Spleen (tissue), 13 donors: ENCODE measurements at regions of chr18 and their contacts with region 1.

Region 1: GRCh38 chr18:2547477-2548087 is 23.7 kb downstream of the METTL4 start:
- DNase-seq: no peak
- H3K4me3 ChIP-seq: no peak overlapping the region
- H3K27ac ChIP-seq: no peak overlapping the region
- H3K4me1 ChIP-seq: peaks cover 0 to 10% (median 0%) of the 10 kb centered on the region in 6 donors
- H3K27me3 ChIP-seq: no peaks in the 10 kb centered on the region
- CTCF ChIP-seq: peak in 10 of 11 experiments; percentile 16 to 59 (median 53)
- POLR2A ChIP-seq: no peak

Region 2: DNA sequence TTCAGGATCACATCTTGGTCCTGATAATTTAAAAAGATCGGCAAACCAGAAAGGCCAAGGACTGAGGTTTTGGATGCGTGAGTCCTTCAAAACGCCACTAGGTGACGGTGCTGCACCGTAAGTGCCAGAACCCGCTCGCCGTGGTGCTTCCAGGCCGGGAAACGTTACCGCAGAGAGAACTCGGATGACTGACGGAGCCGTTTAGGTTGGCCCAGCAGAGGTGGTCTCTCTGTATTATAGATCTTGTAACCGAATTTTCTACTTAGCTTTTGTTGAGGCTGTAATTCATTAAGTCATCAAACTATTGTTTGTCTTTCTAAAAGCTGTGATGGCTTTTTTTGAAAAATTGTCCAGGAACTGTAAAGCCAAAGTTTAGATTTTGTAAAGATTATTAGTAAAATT is 1682.7 kb before region 1 on chr18:
- intact Hi-C with region 1: loop called (anchors 10 kb)
- DNase-seq: peak; percentile 82
- H3K4me3 ChIP-seq: no peak overlapping the region
- H3K27ac ChIP-seq: no peak overlapping the region
- H3K4me1 ChIP-seq: peaks cover 0 to 7% (median 1%) of the 10 kb centered on the region in 6 donors
- H3K27me3 ChIP-seq: peaks cover 0 to 47% (median 0%) of the 10 kb centered on the region in 7 donors
- CTCF ChIP-seq: peak; percentile 51 to 86 (median 72)
- POLR2A ChIP-seq: no peak

Region 3: DNA sequence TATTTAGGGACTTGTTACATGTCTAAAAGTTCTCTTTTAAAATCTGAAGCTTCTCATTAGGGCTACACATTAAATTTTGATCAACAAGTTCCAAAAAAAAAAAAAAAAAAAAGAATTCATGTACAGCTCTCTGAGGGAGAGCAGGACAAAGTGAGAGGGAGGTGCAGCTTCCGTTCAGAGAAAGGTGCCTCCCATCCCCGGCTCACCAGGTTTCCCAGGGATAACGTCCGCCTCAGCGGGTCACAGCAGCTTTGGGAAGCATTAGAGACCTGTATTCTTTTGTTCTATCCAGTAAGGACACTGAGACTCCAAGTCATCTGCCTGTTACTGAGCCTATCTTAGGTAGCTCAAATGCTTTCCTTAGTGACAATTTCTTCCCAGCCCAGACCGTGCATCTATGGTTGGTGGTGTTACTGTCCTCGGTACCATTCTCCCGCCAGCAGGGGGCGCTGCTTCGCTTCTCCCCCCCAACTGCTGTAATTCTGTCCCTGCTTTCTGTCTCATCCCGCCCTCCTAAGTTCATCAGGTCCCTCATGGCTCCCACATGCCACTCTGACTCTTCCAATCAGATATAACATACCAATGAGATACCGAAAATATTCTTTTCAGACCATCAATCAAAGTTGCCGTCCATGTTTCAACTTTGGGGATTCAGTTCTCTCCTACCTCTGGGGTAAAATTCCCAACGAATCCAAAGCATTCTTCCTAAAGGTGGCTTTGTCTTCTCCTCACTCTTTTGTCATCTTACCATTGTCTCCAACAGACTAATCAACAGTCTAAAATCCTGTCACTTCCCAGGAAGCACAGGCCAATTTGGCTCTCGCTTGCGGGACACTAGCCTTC is 442.7 kb before region 1 on chr18:
- intact Hi-C with region 1: loop called (anchors 10 kb)
- DNase-seq: peak; percentile 80
- H3K4me3 ChIP-seq: no peak overlapping the region
- H3K27ac ChIP-seq: no peak overlapping the region
- H3K4me1 ChIP-seq: no peaks in the 10 kb centered on the region
- H3K27me3 ChIP-seq: peaks cover 0 to 7% (median 0%) of the 10 kb centered on the region in 7 donors
- CTCF ChIP-seq: peak; percentile 30 to 75 (median 66)
- POLR2A ChIP-seq: no peak

Region 4: GRCh38 chr18:2337552-2338141 is 209.9 kb before region 1 on chr18:
- intact Hi-C with region 1: loop called (anchors 10 kb)
- DNase-seq: no peak
- H3K4me3 ChIP-seq: no peak overlapping the region
- H3K27ac ChIP-seq: no peak overlapping the region
- H3K4me1 ChIP-seq: no peaks in the 10 kb centered on the region
- H3K27me3 ChIP-seq: no peaks in the 10 kb centered on the region
- CTCF ChIP-seq: peak; percentile 25 to 65 (median 53)
- POLR2A ChIP-seq: no peak

Region 5: DNA sequence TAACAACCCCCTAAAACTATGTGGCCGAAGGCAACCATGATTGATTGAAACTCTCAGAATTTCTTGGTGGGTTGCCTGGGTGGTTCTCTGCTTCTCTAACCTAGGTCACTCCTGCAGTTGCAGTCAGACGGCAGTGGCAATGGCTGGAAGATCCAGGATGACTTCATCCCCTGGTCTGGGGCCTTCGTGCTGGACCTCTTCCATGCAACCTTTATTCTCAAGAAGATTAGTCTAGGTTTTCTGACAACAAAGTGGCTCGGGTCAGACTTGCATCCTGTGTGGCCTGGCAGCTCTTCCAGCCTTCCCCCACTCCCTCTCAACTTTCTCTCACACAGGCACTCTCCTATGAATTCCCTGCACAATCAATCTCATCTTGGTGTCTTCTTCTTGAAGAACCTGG is 52.7 kb before region 1 on chr18:
- intact Hi-C with region 1: no loop called
- DNase-seq: no peak
- H3K4me3 ChIP-seq: no peak overlapping the region
- H3K27ac ChIP-seq: no peak overlapping the region
- H3K4me1 ChIP-seq: no peaks in the 10 kb centered on the region
- H3K27me3 ChIP-seq: no peaks in the 10 kb centered on the region
- CTCF ChIP-seq: no peak
- POLR2A ChIP-seq: no peak